ENCODE measurements at regions of chr17 and their contacts with region 1.

Region 1: DNA sequence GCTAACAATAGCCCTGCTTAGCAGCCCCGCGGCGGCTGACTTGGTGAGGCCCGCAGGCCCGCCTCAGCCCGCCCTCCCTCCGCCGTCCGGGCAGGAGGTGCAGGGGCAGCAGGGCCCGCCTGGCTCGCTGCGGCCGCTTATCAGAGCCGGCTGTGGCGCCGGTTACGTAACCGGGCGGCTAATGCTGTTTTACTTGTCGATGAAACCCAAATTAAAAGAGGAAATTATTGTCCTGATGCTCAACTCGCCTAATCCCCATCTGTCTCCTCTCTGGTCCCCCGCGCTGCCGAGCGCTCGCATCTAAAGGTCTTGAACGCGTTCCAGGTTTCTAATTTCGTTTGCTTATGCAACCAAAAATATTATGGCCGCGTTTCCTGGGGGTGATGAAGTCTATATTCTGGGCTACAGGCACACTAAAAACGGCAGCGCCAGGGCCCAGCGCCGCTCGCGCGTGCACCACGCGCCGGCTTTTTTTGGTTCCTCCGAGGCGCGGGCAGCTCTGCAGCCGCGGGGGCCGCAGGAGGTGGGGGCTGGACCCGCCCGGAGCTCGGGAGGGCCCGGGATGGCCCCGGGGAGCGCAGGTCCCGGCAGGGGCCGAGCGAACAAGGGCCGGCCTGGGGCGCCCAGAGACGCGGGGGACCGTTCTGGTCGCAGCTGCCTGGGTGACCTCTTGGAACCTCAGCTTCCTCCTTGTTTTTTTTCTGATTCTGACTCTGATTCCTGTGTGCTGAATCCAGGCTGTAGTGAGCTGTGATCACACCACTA is 65.2 kb upstream of the TOB1 start:
- DNase-seq: peak; percentile 92
- H3K4me3 ChIP-seq: peak overlapping the region; percentile 44
- H3K4me3 Mint-ChIP-seq: peak overlapping the region; percentile 78
- H3K27ac Mint-ChIP-seq: peak overlapping the region; percentile 89
- H3K4me1 ChIP-seq: peaks cover 28% of the 10 kb centered on the region
- H3K4me1 Mint-ChIP-seq: peaks cover 29% of the 10 kb centered on the region
- H3K27me3 ChIP-seq: no peaks in the 10 kb centered on the region
- H3K27me3 Mint-ChIP-seq: no peaks in the 10 kb centered on the region
- CTCF ChIP-seq: no peak

Region 2: DNA sequence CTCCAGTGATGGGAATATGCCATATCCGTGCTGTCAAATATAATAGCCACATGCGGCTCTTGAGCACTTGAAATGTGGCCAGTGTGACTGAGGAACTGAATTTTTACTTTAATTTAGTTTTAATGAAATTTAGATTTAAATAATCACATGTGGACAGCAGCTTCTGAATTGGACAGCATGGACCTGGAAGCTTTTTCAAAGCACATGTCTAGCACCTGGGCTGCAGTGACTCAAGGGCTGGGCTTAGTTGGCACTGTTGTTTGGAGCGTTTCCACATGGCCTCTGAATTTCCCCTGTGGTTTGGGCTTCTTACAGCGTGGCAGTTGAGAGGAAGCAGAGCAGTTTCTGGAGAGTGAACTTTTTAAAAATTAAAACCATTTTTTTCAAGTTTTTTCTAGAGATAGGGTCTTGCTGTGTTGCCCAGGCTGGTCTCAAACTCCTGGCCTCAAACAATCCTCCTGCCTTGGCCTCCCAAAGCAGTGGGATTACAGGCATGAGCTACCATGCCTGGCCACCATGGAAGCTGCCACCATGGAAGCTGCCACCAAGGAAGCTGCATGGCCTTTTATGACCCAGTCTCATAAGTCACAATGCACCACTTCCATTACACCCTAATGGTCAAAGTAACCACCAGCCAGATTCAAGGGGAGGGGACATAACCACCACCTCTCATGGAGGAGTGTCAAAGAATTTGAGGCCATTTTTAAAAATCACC is 58.5 kb before region 1 on chr17:
- CTCF ChIA-PET with region 1: no interaction called
- POLR2A ChIA-PET with region 1: interaction called, 104 read pairs
- intact Hi-C with region 1: no loop called
- DNase-seq: no peak
- H3K4me3 ChIP-seq: no peak overlapping the region
- H3K4me3 Mint-ChIP-seq: no peak overlapping the region
- H3K27ac Mint-ChIP-seq: no peak overlapping the region
- H3K4me1 ChIP-seq: peaks cover 8% of the 10 kb centered on the region
- H3K4me1 Mint-ChIP-seq: peaks cover 3% of the 10 kb centered on the region
- H3K27me3 ChIP-seq: no peaks in the 10 kb centered on the region
- H3K27me3 Mint-ChIP-seq: no peaks in the 10 kb centered on the region
- CTCF ChIP-seq: no peak

Region 3: DNA sequence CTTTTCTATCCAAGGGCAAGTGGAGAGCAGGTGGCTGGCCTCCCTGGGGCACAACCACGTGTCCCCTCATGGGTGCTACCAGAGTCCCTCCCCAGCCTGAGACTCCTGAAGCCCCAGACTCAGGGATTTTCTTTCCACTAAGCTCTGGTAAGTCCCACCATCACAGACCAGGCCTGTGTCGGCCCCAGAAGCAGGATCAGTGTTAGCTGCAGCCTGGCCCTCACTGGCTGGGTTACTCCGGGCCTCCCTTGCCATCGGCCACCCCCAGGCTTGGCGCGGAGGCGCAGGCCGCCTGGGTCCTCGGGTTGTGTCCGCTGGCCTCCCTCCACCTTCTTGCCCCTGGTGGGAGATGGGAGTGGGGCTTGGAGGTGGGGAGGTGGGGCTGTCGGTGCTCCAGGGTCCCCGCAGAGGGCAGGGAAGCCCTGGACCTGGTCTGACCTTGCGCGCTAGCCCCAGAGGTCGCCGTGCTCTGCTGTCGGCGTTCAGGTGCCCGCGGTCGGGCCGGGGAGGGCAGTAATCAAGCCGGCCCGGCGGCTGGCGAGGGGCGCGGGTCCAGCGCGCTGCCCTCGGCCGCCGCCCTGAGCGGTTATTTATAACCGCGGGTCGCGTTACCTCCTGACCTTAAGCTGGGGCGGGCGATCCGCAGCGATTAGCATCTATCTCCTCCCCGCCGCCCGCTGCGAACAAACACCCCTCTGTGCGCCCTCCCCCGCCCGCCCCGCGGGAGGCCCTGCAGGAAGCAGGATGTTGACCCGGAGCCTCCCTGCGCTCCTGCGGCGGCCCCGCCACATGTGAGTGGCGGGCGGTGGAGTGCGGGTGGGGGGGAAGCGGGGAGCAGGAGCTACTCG is 13.0 kb after region 1 on chr17:
- CTCF ChIA-PET with region 1: interaction called, 8 read pairs
- POLR2A ChIA-PET with region 1: interaction called, 11 read pairs
- intact Hi-C with region 1: loop called (anchors 1 kb)
- DNase-seq: peak; percentile 96 to 98
- H3K4me3 ChIP-seq: peak overlapping the region; percentile 52
- H3K4me3 Mint-ChIP-seq: peak overlapping the region; percentile 73
- H3K27ac Mint-ChIP-seq: peak overlapping the region; percentile 59
- H3K4me1 ChIP-seq: peaks cover 27% of the 10 kb centered on the region
- H3K4me1 Mint-ChIP-seq: peaks cover 29% of the 10 kb centered on the region
- H3K27me3 ChIP-seq: no peaks in the 10 kb centered on the region
- H3K27me3 Mint-ChIP-seq: no peaks in the 10 kb centered on the region
- CTCF ChIP-seq: peak; percentile 53 to 60

Measured in Caco-2 (cell line).